ENCODE measurements at regions of chr2 and their contacts with region 1.

Region 1: DNA sequence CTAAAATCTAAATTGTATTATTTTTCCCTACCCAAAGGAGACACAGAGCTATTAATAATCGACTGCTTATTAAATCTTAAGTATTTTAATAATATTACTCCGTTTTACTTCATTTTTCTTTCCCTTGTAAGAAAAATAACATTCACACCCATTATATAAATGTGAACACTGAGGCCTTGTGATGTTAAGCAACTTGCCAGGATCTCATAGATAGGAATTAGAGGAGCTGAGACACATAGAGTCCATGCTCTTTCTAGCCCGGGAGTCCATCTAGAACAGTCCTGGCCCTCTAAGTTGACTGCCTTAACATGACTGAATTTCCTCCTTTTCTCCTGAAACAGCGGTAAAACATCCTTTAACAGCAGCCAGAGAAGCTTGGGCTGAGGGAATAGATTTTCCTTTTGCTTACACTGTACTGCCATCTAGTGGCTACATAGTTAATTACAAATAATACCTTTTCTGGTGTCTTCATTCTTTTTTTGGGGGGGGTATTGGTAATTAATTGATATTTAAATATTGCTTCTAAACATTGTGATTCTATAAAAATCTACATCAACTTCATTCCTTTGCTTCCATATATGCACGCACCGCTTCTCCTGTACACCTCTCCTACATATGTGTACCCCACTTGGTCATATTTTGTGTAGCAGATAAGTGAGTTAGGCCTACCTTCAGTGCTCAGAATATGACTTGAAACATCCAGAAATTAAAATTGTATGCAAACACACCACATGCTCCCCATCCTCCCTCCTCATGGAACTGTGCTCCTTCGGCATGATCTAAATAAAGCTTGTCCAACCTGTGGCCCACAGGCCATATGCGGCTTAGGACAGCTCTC is 125.8 kb upstream of the HNMT start:
- DNase-seq: peak; percentile 9 to 30 (median 17)
- H3K4me3 ChIP-seq: no peak overlapping the region
- H3K4me3 Mint-ChIP-seq: no peak overlapping the region
- H3K27ac ChIP-seq: no peak overlapping the region
- H3K27ac Mint-ChIP-seq: no peak overlapping the region
- H3K4me1 ChIP-seq: no peaks in the 10 kb centered on the region
- H3K4me1 Mint-ChIP-seq: no peaks in the 10 kb centered on the region
- H3K27me3 ChIP-seq: no peaks in the 10 kb centered on the region
- H3K27me3 Mint-ChIP-seq: peaks cover 0 to 2% (median 0%) of the 10 kb centered on the region in 3 donors
- CTCF ChIP-seq: peak; percentile 76

Region 2: DNA sequence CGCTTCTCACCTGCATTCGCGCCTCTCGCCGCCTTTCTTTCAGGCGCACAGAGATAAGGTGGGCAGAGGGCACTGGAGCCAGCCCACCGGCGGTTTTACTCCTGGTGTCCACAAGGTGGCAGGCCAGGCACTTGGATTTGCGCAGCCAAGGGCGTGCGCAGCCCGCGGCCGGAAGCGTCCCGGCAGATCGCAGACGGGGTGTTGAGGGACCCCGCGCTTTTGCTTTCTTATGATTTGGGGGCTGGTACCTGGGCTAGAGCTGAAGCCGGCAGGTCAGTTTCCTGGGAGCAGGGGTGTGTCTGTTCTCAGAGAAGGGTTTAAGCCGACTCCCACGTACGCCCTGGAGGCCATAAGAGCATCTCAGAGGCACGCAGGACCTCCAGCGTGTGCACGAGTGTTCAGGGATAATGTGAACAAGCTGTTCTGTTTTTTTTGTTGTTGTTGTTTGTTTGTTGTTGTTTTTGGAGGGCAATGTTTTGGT is 1414.9 kb before region 1 on chr2:
- intact Hi-C with region 1: loop called (anchors 5 kb)
- DNase-seq: peak; percentile 37 to 62 (median 59)
- H3K4me3 ChIP-seq: peak overlapping the region; percentile 8 to 74 (median 28)
- H3K4me3 Mint-ChIP-seq: peak overlapping the region; percentile 81 to 96
- H3K27ac ChIP-seq: no peak overlapping the region
- H3K27ac Mint-ChIP-seq: peak overlapping the region in 1 of 7 donors; percentile 52
- H3K4me1 ChIP-seq: peaks cover 0 to 8% of the 10 kb centered on the region in 2 donors
- H3K4me1 Mint-ChIP-seq: peaks cover 10% of the 10 kb centered on the region
- H3K27me3 ChIP-seq: peaks cover 17 to 25% of the 10 kb centered on the region in 2 donors
- H3K27me3 Mint-ChIP-seq: peaks cover 25 to 50% (median 38%) of the 10 kb centered on the region in 3 donors
- CTCF ChIP-seq: peak; percentile 90

Region 3: GRCh38 chr2:137644731-137645130 is 193.7 kb before region 1 on chr2:
- intact Hi-C with region 1: no loop called
- DNase-seq: no peak
- H3K4me3 ChIP-seq: no peak overlapping the region
- H3K4me3 Mint-ChIP-seq: no peak overlapping the region
- H3K27ac ChIP-seq: no peak overlapping the region
- H3K27ac Mint-ChIP-seq: no peak overlapping the region
- H3K4me1 ChIP-seq: no peaks in the 10 kb centered on the region
- H3K4me1 Mint-ChIP-seq: no peaks in the 10 kb centered on the region
- H3K27me3 ChIP-seq: no peaks in the 10 kb centered on the region
- H3K27me3 Mint-ChIP-seq: peaks cover 0 to 2% (median 0%) of the 10 kb centered on the region in 3 donors
- CTCF ChIP-seq: no peak

Measured in CD14-positive monocyte (primary cell).